ENCODE measurements at regions of chr3 and their contacts with region 1.

Region 1: DNA sequence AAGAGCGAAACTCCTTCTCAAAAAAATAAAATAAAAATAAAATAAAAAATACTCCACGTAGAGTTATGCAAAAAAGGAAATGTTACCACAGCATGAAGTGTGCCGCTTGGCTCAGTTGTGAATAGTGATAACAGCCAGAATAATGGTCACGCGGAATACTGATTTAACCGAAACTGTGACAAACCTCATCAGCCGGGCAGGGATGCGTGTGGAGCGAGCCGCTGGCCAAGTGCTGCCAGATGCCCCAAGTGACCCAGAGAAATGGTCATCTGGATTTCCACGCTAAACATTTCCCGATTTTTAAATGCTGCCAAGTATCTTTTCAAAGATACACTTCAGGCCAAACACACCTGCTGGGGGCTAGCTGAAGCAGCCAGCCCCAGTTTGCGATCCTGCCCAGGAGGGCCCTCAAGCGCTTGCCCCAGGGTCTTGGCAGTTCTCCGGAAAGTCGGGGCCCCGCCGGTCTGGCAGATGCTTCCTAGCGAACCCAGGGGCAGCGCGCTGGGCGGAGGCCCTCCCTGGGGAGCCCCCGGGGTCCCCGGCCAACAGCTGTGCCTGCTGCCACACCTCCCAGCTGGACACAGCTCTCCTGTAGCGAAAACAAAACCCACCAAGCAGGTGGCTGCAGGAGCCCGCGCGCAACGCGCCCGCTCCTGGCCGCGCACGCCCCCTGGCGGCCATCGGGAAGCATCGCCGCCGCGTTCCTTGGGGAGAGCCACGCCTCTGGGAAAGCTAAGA is 35.1 kb downstream of the CMTM6 start:
- DNase-seq: peak; percentile 64 to 82
- ATAC-seq: peak; percentile 91 to 95
- H3K4me3 ChIP-seq: no peak overlapping the region
- H3K27ac ChIP-seq: no peak overlapping the region
- H3K4me1 ChIP-seq: peaks cover 17% of the 10 kb centered on the region
- CTCF ChIP-seq: peak; percentile 97
- EP300 ChIP-seq: no peak
- POLR2A ChIP-seq: no peak
- RAD21 ChIP-seq: peak; percentile 81 to 88

Region 2: DNA sequence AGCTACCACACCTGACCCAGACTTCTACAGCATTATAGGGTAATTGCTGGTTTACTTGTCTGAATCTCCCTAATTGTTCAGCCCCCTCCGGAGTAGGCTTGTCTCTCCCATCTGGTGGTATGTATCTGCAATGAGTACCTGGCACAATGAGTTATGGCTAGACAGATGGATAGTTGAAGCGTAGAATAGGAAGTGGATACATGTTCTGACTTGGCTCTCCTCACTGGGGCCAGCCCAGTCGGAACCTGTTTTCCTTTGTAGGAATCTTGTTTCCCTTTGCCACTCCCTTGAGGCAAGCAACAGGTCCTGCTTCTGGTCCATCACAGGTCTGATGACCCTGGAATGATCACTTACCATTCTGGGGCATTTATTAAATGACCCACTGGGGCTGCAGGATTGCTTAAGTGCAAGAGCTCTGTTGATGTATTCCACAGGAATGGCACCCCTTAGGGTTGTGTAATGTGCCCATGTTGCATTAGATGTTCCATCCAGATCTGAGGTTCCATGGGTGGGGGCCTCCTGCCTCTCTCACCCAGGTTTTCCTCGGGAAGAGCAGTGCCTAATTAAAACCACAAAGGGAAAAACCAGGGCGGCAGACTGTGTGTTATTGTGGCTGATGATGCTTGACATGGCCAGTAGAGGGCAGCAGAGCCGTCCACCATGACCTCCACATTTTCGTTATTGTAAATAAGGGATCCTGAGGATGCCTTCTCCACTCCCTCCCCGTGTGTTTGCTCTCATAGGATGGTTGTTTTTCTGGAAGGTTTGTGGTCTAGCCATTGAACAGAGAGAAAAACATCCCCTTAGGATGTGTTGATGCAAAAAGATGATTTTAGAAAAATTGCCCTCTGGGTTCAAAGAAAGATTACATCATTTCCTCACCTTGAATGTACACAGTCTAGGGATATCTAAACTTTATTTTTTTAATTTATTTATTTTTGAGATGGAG is 171.0 kb before region 1 on chr3:
- CTCF ChIA-PET with region 1: interaction called, 22 read pairs
- POLR2A ChIA-PET with region 1: no interaction called
- DNase-seq: peak; percentile 67 to 86
- ATAC-seq: peak; percentile 91 to 97
- H3K4me3 ChIP-seq: no peak overlapping the region
- H3K27ac ChIP-seq: peak overlapping the region in 1 of 2 experiments; percentile 14; a peak in 3 of 6 replicates
- H3K4me1 ChIP-seq: peaks cover 10% of the 10 kb centered on the region; the same call in 1 of the 3 replicates
- CTCF ChIP-seq: peak; percentile 89
- EP300 ChIP-seq: no peak
- POLR2A ChIP-seq: no peak
- RAD21 ChIP-seq: peak; percentile 74 to 76

Region 3: GRCh38 chr3:32401556-32402081 is 65.9 kb before region 1 on chr3:
- CTCF ChIA-PET with region 1: interaction called, 10 read pairs
- POLR2A ChIA-PET with region 1: no interaction called
- DNase-seq: peak; percentile 52 to 64
- ATAC-seq: peak; percentile 91 to 93
- H3K4me3 ChIP-seq: peak overlapping the region; percentile 42
- H3K27ac ChIP-seq: peak overlapping the region; percentile 92 to 97
- H3K4me1 ChIP-seq: peaks cover 14% of the 10 kb centered on the region; the same call in 2 of the 3 replicates
- CTCF ChIP-seq: no peak
- EP300 ChIP-seq: no peak
- POLR2A ChIP-seq: no peak; the same call in 1 of the 2 replicates
- RAD21 ChIP-seq: no peak

Region 4: DNA sequence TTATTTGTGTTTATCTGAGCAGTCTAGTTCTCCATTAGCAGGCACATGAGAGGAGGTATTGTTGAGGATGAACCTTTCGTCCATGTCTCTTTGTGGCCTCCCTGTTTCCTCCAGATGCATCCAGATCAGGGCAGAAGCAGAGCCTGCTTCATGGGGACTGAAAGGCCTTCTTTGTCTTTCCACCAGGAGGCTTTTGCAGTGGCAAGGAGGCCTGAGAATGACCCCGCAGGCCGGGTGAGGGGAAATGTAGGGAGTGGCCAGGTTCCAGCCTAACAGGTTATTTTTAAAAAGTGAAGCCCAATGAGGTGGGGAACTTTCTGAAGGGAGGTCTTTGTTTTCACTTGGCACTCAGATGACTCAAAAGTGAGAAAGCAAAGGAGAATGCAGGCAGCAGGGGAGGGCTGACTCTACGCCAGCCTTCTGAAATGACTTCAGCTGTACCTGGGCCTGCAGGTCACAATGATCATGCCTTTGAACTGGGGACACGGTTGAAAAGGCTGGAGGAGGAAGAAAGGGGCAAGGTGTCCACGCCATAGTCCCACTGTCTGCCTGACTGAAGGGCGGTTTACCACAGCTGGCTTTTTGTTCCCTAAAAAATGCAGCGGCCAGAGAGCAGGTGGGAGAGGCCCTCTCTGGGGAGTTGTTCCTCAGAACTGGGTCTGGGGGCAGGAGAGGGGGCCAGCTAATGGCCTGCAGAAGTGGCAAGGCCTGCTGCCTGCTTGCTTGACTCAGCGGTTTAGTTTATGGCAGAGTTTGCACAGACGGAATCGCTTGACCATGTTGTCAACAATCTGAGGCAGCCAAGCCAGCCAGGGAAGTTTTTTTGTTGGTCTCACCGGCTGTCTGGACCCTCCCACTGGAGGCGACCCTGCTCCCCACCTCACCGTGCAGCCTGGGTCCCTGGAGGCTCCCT is 47.1 kb before region 1 on chr3:
- CTCF ChIA-PET with region 1: interaction called, 18 read pairs
- POLR2A ChIA-PET with region 1: no interaction called
- DNase-seq: peak; percentile 43 to 65
- ATAC-seq: peak; percentile 75 to 88
- H3K4me3 ChIP-seq: no peak overlapping the region
- H3K27ac ChIP-seq: peak overlapping the region in 1 of 2 experiments; percentile 54; a peak in 3 of 6 replicates
- H3K4me1 ChIP-seq: peaks cover 32% of the 10 kb centered on the region
- CTCF ChIP-seq: no peak
- EP300 ChIP-seq: no peak
- POLR2A ChIP-seq: no peak
- RAD21 ChIP-seq: no peak

Region 5: DNA sequence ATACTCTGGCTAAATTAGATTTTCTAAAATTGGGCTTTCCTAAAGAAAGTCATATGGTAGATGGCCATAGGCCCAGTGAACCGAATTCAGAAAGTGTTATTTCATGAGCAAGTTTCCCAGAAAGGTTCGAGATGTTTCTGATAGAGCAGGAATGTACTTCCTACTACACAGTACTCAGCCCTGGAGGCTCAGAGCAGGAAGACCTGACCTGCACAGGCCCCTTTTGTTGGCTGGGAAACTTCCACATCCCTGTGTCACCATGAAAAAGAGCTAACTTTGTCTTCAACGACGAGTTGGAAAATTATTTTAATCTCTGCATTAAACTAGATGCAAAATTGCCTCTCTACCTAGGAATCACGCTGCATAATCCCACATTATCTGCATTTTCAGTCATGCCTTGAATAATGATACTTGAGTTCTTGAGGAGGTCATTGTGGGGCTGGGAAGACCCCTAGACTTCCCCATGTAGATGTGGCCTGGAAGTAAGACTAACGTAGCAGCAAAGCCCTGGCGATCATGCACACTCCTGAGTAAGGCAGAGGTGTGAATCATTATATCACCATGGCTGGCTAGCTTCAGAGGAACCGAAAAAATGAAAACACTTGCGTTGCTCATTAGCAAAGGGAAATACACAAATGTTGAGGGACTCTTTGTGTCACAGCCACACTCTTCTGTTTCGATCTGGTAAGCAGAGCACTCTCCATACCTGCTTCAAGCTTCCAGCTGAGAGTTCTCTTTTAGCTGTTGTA is 28.7 kb before region 1 on chr3:
- CTCF ChIA-PET with region 1: interaction called, 15 read pairs
- POLR2A ChIA-PET with region 1: no interaction called
- DNase-seq: no peak
- ATAC-seq: no peak
- H3K4me3 ChIP-seq: no peak overlapping the region
- H3K27ac ChIP-seq: no peak overlapping the region
- H3K4me1 ChIP-seq: no peaks in the 10 kb centered on the region
- CTCF ChIP-seq: no peak
- EP300 ChIP-seq: no peak
- POLR2A ChIP-seq: no peak
- RAD21 ChIP-seq: no peak

Region 6: GRCh38 chr3:32498252-32498651 is 30.8 kb after region 1 on chr3:
- CTCF ChIA-PET with region 1: interaction called, 13 read pairs
- POLR2A ChIA-PET with region 1: interaction called, 3 read pairs
- DNase-seq: no peak
- ATAC-seq: no peak
- H3K4me3 ChIP-seq: no peak overlapping the region
- H3K27ac ChIP-seq: no peak overlapping the region
- H3K4me1 ChIP-seq: peaks cover 19% of the 10 kb centered on the region; the same call in 2 of the 3 replicates
- CTCF ChIP-seq: no peak
- EP300 ChIP-seq: no peak
- POLR2A ChIP-seq: no peak
- RAD21 ChIP-seq: no peak

Region 7: GRCh38 chr3:32596909-32597369 is 129.4 kb after region 1 on chr3:
- CTCF ChIA-PET with region 1: no interaction called
- POLR2A ChIA-PET with region 1: no interaction called
- DNase-seq: no peak
- ATAC-seq: no peak
- H3K4me3 ChIP-seq: no peak overlapping the region
- H3K27ac ChIP-seq: no peak overlapping the region
- H3K4me1 ChIP-seq: peaks cover 10% of the 10 kb centered on the region; the same call in 1 of the 3 replicates
- CTCF ChIP-seq: no peak
- EP300 ChIP-seq: no peak
- POLR2A ChIP-seq: no peak
- RAD21 ChIP-seq: no peak